ENCODE measurements at regions of chr17 and their contacts with region 1.

Region 1: DNA sequence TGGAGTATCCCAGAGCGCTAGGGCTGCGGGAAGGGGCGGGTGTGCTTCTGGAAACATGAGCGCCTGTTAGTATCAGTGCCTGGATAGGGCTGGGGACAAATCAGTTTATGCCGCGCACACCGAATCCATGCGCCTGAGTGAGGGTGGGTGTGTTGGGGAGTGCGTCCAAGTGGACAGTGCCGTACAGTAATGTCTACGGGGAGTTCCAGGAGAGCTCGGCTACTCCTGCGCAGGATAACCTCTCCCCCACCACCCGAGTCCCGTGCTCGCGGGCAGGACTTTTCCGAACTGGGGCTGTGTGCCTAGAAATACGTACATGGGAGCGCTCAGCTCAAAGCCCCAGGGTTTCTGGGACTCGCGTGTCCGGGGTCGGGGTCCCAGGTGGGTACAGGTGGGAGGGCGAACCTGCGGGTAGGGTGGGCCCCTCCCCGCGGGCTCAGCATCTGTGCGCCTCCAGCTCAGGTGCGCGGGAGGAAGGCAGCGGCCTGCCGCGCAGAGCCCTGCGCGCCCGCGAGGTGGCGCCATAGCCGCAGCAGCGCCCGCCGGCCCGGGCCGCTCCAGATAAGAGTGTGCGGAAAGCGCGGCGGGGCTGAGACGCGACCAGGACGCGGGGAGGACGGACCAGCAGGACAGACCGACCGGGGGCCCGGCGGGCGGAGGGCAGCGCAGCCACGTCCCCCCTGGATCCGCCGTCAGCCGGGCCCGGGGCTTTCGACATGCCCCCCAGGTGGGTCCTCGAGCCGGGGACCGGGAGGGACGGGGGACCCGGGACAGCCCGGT is at the start of gene HIC1:
- DNase-seq: peak; percentile 78 to 92 (median 84)
- ATAC-seq: peak; percentile 33 to 64 (median 54)
- H3K4me3 ChIP-seq: peak within 1 kb of the TSS; percentile 24 to 87 (median 70)
- H3K27ac ChIP-seq: peak within 1 kb of the TSS; percentile 67 to 98 (median 92)
- H3K4me1 ChIP-seq: peaks cover 4 to 79% (median 50%) of the 10 kb centered on the region in 12 donors
- H3K27me3 ChIP-seq: peaks cover 0 to 64% (median 10%) of the 10 kb centered on the region in 9 donors
- CTCF ChIP-seq: peak; percentile 93 to 99 (median 98)
- POLR2A ChIP-seq: peak in 1 of 2 donors; percentile 75
- total RNA-seq, gene HIC1: 8.9 to 29.6 (median 16.7) TPM

Region 2: DNA sequence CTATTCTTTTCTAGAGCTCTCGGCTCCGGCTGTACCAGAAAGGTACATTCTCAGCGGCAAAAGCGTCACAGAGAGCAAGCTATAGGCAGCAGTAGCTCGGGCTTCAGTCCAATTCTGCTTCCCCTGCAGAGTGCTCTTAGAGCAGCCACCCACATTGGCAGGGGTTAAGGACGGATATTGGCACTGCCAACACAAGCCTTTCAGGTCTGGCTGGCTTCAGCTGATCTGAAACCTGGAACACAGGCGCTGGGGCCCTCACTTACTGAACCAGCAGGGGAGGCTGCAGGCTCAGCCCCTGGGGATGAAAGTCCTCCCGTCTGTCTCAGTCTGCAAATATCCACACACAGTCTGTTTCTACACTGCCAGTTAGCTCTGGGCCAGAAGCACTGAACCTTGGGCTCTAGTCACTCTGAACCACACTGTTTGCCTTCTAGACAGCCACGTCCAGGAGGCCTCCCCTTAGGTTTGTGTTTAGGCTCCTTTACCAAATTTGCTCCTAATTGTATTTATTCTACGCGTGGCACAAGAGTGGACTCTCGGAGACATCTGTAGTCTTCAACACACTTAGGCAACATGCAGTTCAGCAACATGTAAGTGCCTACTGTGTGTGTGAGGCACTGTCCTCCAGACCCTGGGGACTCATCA is 40.3 kb after region 1 on chr17:
- intact Hi-C with region 1: loop called in 2 of 10 experiments (anchors 5 kb)
- DNase-seq: peak; percentile 76 to 87 (median 82)
- ATAC-seq: peak; percentile 85 to 93 (median 92)
- H3K4me3 ChIP-seq: peak overlapping the region in 1 of 12 donors; percentile 16
- H3K27ac ChIP-seq: peak overlapping the region in 11 of 12 donors; percentile 8 to 57 (median 45)
- H3K4me1 ChIP-seq: peaks cover 0 to 43% (median 27%) of the 10 kb centered on the region in 12 donors
- H3K27me3 ChIP-seq: no peaks in the 10 kb centered on the region
- CTCF ChIP-seq: peak; percentile 37 to 82 (median 74)
- POLR2A ChIP-seq: no peak

Region 3: GRCh38 chr17:2233441-2233947 is 178.8 kb after region 1 on chr17:
- intact Hi-C with region 1: loop called in 1 of 10 experiments (anchors 2 kb)
- DNase-seq: peak in 3 of 5 donors; percentile 26 to 62 (median 29)
- ATAC-seq: peak in 3 of 4 donors; percentile 19 to 64 (median 46)
- H3K4me3 ChIP-seq: no peak overlapping the region
- H3K27ac ChIP-seq: peak overlapping the region; percentile 9 to 84 (median 56)
- H3K4me1 ChIP-seq: peaks cover 3 to 80% (median 50%) of the 10 kb centered on the region in 12 donors
- H3K27me3 ChIP-seq: no peaks in the 10 kb centered on the region
- CTCF ChIP-seq: no peak
- POLR2A ChIP-seq: no peak

Region 4: DNA sequence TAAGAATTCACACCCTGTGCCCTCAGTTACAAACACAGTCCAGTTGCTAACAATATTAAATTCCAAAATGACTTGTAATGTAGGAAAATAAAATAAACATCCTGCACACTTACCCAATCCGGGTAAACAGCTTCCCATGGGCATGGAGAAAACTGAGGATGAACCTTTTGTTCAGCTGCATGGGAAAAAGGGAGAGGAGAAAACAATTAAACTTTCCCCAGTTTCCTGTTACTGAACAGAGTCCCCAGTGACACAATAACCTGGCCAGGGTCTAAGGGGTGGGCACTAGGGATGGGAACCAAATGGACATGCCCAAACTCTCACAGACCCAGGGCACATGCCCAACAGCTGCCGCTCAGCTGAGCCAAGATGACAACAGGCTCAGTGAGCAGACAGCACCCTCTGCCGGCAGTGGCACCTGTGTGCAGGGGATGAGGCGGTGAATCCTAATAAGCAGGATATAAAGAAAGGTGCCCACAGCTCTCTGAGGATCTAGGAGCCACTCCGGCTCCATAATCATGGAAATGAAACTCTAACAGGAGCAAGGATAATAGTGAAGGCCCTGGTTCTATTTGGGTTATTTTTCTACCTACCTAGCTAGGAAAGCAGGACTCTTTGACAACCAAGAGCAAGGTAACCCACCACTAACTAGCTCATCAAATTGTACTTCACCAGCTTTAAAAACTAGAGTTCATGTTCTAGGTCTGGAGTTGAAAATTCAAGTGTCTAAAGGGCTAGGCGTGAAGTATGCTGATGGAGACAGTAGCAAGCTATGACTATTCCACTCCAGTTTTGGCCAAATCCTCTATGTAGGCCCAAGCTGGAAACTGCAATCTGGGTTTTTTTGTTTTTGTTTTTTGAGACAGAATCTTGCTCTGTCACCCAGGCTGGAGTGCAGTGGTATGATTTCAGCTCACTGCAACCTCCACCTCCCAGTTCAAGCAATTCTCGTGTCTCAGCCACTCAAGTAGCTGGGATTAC is 190.1 kb after region 1 on chr17:
- intact Hi-C with region 1: loop called (anchors 1 to 2 kb)
- DNase-seq: peak; percentile 84 to 94 (median 87)
- ATAC-seq: peak; percentile 79 to 92 (median 88)
- H3K4me3 ChIP-seq: no peak overlapping the region
- H3K27ac ChIP-seq: peak overlapping the region in 11 of 12 donors; percentile 22 to 75 (median 56)
- H3K4me1 ChIP-seq: peaks cover 0 to 26% (median 13%) of the 10 kb centered on the region in 12 donors
- H3K27me3 ChIP-seq: no peaks in the 10 kb centered on the region
- CTCF ChIP-seq: peak in 11 of 12 donors; percentile 95 to 100 (median 97)
- POLR2A ChIP-seq: no peak

Region 5: GRCh38 chr17:2282297-2282873 is 227.7 kb after region 1 on chr17:
- intact Hi-C with region 1: loop called in 7 of 10 experiments (anchors 1 to 10 kb)
- DNase-seq: no peak
- ATAC-seq: peak in 3 of 4 donors; percentile 48 to 80 (median 65)
- H3K4me3 ChIP-seq: no peak overlapping the region
- H3K27ac ChIP-seq: no peak overlapping the region
- H3K4me1 ChIP-seq: peaks cover 0 to 16% (median 0%) of the 10 kb centered on the region in 12 donors
- H3K27me3 ChIP-seq: no peaks in the 10 kb centered on the region
- CTCF ChIP-seq: peak; percentile 42 to 72 (median 62)
- POLR2A ChIP-seq: no peak

Region 6: DNA sequence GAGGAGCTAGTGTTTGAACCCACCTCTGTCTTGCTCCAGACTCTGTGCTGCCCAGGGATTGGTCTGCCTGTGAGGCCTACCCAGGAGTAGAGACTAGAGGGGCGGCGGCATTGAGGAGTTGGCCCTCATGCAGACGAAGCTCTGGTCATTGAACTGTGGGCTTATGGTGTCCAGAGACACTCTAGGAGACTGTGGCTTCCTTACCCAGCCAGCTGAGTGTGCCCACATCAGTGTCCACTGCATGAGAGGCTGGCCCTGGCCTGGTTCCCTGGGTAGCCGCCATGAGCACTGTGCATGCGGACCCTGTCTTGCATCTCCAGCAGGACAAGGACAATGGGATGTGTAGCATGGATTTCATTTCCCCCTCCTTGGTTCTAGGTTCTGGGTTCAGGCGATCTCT is 296.6 kb after region 1 on chr17:
- intact Hi-C with region 1: loop called in 2 of 10 experiments (anchors 5 kb)
- DNase-seq: no peak
- ATAC-seq: peak in 1 of 4 donors; percentile 10
- H3K4me3 ChIP-seq: no peak overlapping the region
- H3K27ac ChIP-seq: no peak overlapping the region
- H3K4me1 ChIP-seq: peaks cover 0 to 13% (median 5%) of the 10 kb centered on the region in 12 donors
- H3K27me3 ChIP-seq: no peaks in the 10 kb centered on the region
- CTCF ChIP-seq: no peak
- POLR2A ChIP-seq: no peak

Measured in heart left ventricle (tissue), 16 donors.